Dorsolateral prefrontal cortex (tissue), 120 donors: ENCODE measurements at regions of chr2 and their contacts with region 1.

Region 1: GRCh38 chr2:152236191-152236925 is 60.8 kb upstream of the STAM2 start:
- DNase-seq: peak in 1 of 10 donors; percentile 63
- H3K4me3 ChIP-seq: no peak overlapping the region
- H3K27ac ChIP-seq: peak overlapping the region in 1 of 59 donors; percentile 19
- H3K27me3 ChIP-seq: no peaks in the 10 kb centered on the region
- CTCF ChIP-seq: no peak

Region 2: GRCh38 chr2:150716186-150716585 is 1520.2 kb before region 1 on chr2:
- intact Hi-C with region 1: no loop called
- DNase-seq: no peak
- H3K4me3 ChIP-seq: no peak overlapping the region
- H3K27ac ChIP-seq: no peak overlapping the region
- H3K27me3 ChIP-seq: peaks cover 0 to 7% (median 0%) of the 10 kb centered on the region in 45 donors
- CTCF ChIP-seq: no peak

Region 3: GRCh38 chr2:152115952-152116351 is 120.4 kb before region 1 on chr2:
- intact Hi-C with region 1: no loop called
- DNase-seq: no peak
- H3K4me3 ChIP-seq: no peak overlapping the region
- H3K27ac ChIP-seq: no peak overlapping the region
- H3K27me3 ChIP-seq: no peaks in the 10 kb centered on the region
- CTCF ChIP-seq: no peak

Region 4: GRCh38 chr2:152304836-152305235 is 68.5 kb after region 1 on chr2:
- intact Hi-C with region 1: no loop called
- DNase-seq: no peak
- H3K4me3 ChIP-seq: no peak overlapping the region
- H3K27ac ChIP-seq: no peak overlapping the region
- H3K27me3 ChIP-seq: no peaks in the 10 kb centered on the region
- CTCF ChIP-seq: no peak

Region 5: DNA sequence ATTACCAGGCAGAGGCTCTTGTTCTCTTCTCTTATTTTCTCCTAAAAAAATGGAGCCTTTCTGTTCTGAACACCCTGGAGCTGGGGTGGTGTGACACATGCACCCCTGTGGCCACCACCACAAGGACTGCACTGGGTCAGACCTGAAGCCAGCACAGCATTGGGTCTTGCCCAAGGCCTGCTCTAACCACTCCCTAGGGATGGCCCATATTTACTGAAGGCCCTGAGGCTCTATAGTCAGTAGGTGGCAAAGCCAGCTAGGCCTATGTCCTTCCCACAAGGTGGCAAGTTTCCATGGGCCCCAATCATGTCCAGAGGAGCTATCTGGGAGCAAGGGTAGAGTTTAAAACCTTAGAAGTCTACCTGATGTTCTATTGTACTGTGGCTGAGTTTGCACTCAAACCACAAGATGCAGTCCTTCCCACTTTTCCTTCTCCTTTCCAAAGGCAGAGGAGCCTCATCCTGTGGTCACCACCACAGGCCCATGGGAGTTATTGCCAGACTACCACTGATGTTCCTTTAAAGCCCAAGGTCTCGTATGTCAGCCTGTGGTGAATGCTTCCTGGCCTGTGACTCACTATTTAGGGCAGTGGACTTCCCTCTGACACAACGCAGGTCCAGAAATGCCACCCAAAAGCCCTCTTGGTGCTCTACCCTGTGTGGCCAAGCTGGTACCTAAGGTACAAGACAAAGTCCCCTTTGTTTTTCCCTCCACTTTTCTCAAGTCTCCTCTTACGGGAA is 83.6 kb after region 1 on chr2:
- intact Hi-C with region 1: loop called in 1 of 2 experiments (anchors 10 kb)
- DNase-seq: no peak
- H3K4me3 ChIP-seq: no peak overlapping the region
- H3K27ac ChIP-seq: no peak overlapping the region
- H3K27me3 ChIP-seq: no peaks in the 10 kb centered on the region
- CTCF ChIP-seq: no peak

Region 6: DNA sequence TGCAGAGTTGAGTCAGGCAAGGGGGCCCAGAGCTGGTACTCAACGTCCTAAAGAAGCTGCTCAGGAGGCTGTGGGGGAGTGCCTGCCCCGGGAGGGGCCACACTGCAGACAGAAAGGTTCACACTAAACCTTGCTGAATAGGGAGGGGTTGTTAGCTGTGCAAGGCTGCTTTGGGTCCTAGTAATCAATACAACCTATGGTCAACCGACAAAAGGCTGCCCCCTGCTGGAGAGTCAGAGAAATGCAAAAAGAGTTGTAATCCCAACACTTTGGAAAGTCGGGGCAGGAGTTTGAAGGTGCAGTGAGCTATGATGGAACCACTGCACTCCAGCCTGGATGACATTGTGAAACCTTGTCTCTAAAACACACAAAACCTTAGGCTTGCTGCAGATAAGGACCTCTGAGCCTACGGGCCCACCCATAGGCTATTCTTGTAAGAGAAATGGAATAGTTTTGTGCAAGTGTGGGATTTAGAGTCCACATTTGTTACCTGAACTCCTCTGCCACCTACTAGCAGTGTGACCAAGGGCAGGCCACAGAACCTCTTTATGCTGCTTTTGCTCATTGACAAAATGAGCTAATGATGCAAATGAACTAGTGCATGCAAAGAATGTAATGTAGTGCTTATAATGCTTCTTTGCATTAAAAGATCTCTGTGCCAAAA is 399.4 kb after region 1 on chr2:
- intact Hi-C with region 1: no loop called
- DNase-seq: peak in 9 of 10 donors; percentile 31 to 76 (median 63)
- H3K4me3 ChIP-seq: no peak overlapping the region
- H3K27ac ChIP-seq: peak overlapping the region in 46 of 59 donors; percentile 1 to 73 (median 55)
- H3K27me3 ChIP-seq: no peaks in the 10 kb centered on the region
- CTCF ChIP-seq: peak; percentile 70 to 95 (median 87)